Posterior cingulate gyrus (tissue), 11 donors: ENCODE measurements at regions of chr2 and their contacts with region 1.

Region 1: DNA sequence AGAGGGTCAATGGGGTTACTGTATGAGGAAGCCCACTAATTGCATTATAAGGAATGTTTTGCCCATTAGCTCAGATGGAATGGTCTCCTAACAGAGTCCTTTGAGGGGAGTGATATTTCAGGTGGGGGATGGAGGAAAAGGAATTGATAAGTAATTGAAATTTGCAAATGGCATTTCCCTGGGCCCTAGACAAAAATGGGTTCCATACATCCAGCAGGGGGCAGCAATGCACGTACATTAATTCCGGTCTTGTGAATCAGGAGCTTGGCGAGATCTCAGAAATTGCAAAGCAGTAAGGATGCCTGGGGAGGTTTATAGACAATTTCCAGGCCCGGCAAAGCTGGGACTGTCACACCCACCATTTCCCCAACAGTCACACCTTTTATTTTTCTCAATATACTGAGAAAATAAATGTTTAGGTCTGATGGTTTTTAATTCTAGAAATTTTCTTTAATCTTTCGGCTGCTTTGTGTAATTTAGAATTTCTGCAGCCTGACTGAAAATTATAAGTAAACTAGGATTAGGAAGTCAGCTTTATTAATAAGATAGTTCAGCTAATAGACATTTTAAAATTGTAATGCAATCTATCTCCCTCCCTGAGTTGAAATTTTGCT is 122.8 kb downstream of the LYPD1 start:
- DNase-seq: peak in 9 of 10 donors; percentile 39 to 93 (median 82)

Region 2: DNA sequence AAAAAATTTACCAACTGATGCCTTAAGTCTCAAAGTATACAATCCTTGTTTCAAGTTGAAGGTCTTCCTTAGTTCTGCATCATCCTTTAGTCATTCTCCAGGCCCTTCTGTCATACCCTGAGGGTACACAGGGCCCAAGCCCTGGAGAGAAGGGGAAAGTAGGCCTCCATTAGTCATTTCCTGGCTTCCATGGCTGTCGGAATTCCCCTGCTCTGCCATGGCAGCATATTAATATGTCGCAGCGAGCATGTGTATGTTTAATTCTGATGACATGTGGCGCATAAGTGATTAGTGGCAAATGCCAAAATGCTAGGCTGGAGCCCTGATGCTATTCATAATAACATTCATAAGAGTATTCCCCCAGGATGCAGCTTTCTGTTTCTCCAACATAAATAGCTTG is 108.5 kb before region 1 on chr2:
- intact Hi-C with region 1: no loop called
- DNase-seq: no peak

Region 3: DNA sequence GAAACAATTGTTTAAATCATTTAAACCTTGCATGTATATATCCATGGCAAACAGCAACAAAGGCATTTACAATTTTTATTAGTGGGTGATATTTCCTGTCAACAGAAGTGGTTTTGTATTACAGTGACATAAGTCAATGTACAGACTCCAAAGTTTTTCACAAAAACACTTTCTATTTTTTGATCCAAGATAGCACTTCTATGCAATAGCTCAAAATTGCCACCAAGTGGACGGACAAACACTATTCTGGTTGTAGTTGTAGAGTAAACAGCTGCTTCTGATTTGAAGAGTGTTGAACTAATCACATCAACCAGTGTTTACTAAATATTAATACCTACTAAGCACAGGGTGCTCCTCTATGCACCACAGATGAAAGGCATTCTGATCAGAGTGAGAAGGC is 599.7 kb after region 1 on chr2:
- intact Hi-C with region 1: loop called (anchors 10 kb)
- DNase-seq: no peak

Region 4: GRCh38 chr2:133171393-133172004 is 624.3 kb after region 1 on chr2:
- intact Hi-C with region 1: loop called (anchors 2 kb)
- DNase-seq: no peak

Region 5: DNA sequence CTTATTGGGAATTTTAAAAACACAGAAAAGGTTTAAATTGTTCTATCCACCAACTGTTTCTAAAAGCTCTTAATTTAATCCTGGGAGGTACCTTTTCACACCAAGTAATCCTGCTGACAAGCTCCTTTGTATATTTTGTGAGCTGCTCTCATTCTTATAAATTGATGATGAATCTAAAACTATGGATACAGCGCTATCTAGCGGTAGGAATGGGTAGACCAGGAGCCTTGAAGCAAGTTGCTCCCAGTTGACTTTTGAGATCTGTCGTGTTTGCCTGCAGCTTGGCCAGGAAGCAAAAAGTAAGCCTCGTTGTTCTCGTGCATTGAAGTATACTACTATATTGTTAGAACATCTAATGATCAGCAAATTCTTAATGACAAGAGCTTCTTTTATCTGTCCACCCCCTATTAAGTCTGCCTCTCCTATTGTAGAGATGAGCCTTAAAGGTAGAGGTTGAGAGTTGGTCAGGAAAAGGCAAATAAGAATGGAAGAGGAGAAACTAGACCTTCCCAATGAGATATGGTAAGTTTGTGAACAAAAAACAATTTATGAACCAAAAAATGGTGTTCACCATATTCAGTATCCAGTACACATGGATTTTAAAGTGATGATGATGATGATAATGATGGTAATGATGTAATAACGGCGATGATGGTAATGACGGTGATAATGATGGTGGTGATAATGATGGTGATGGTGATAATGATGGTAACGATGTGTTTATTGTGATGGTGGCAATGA is 1233.1 kb after region 1 on chr2:
- intact Hi-C with region 1: loop called (anchors 5 kb)
- DNase-seq: peak in 5 of 10 donors; percentile 18 to 57 (median 39)

Region 6: DNA sequence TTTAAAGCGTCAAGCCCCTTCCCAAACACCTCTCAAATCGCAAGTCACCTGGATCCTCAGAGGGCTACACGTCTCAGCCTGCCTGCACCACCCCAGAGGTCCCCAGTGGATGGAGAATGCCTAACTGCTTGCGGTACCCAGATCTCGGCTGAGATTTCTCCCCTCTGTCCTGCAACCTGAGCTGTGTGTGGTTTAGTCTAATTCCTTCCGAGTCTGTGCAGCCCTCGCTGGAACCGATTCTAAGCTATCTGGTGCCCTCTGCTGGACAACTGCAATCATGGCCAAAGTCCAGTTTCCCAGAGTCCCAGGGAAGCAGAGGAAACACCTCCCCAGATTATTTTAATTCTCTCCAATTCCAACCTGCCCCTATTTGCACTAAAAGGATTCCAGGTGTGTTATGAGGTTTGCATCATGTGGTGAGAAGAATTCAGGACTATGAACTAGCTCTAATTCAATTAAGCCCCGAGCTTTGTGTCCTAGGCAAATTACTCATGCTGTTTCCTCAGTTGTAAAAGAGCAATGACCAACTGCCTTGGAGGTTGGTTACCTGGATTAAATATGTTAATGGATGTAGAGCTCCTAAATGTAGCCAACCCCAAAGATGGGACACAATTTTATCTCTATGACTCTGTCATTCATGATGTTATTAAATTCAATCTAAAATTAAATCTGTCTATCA is 1297.2 kb after region 1 on chr2:
- intact Hi-C with region 1: loop called (anchors 5 kb)
- DNase-seq: peak; percentile 40 to 94 (median 75)